Activated CD4-positive, alpha-beta T cell treated with anti-CD3 and anti-CD28 coated beads for 36 hours (primary cell): ENCODE measurements at regions of chr11 and their contacts with region 1.

Region 1: GRCh38 chr11:48047616-48048015 is 67.3 kb downstream of the PTPRJ start:
- DNase-seq: no peak
- ATAC-seq: no peak
- H3K4me3 Mint-ChIP-seq: no peak overlapping the region
- H3K27ac Mint-ChIP-seq: no peak overlapping the region
- H3K4me1 Mint-ChIP-seq: peaks cover 68% of the 10 kb centered on the region
- H3K27me3 Mint-ChIP-seq: no peaks in the 10 kb centered on the region

Region 2: GRCh38 chr11:47800759-47801158 is 246.9 kb before region 1 on chr11:
- CTCF ChIA-PET with region 1: no interaction called
- POLR2A ChIA-PET with region 1: no interaction called
- intact Hi-C with region 1: no loop called
- DNase-seq: no peak
- ATAC-seq: no peak
- H3K4me3 Mint-ChIP-seq: no peak overlapping the region
- H3K27ac Mint-ChIP-seq: no peak overlapping the region
- H3K4me1 Mint-ChIP-seq: peaks cover 13% of the 10 kb centered on the region
- H3K27me3 Mint-ChIP-seq: no peaks in the 10 kb centered on the region

Region 3: GRCh38 chr11:47863189-47863892 is 184.3 kb before region 1 on chr11:
- CTCF ChIA-PET with region 1: no interaction called
- POLR2A ChIA-PET with region 1: no interaction called
- intact Hi-C with region 1: loop called in 1 of 2 experiments (anchors 10 kb)
- DNase-seq: no peak
- ATAC-seq: peak; percentile 56
- H3K4me3 Mint-ChIP-seq: no peak overlapping the region
- H3K27ac Mint-ChIP-seq: no peak overlapping the region
- H3K4me1 Mint-ChIP-seq: peaks cover 39% of the 10 kb centered on the region
- H3K27me3 Mint-ChIP-seq: no peaks in the 10 kb centered on the region

Region 4: GRCh38 chr11:48034926-48035871 is 12.4 kb before region 1 on chr11:
- CTCF ChIA-PET with region 1: interaction called, 4 read pairs
- POLR2A ChIA-PET with region 1: interaction called, 5 read pairs
- intact Hi-C with region 1: loop called in 1 of 2 experiments (anchors 2 kb)
- DNase-seq: no peak
- ATAC-seq: peak; percentile 40
- H3K4me3 Mint-ChIP-seq: no peak overlapping the region
- H3K27ac Mint-ChIP-seq: peak overlapping the region; percentile 6
- H3K4me1 Mint-ChIP-seq: peaks cover 65% of the 10 kb centered on the region
- H3K27me3 Mint-ChIP-seq: no peaks in the 10 kb centered on the region

Region 5: GRCh38 chr11:48063424-48063978 is 15.9 kb after region 1 on chr11:
- CTCF ChIA-PET with region 1: no interaction called
- POLR2A ChIA-PET with region 1: no interaction called
- intact Hi-C with region 1: loop called in 1 of 2 experiments (anchors 2 kb)
- DNase-seq: no peak
- ATAC-seq: no peak
- H3K4me3 Mint-ChIP-seq: no peak overlapping the region
- H3K27ac Mint-ChIP-seq: no peak overlapping the region
- H3K4me1 Mint-ChIP-seq: peaks cover 49% of the 10 kb centered on the region
- H3K27me3 Mint-ChIP-seq: no peaks in the 10 kb centered on the region

Region 6: DNA sequence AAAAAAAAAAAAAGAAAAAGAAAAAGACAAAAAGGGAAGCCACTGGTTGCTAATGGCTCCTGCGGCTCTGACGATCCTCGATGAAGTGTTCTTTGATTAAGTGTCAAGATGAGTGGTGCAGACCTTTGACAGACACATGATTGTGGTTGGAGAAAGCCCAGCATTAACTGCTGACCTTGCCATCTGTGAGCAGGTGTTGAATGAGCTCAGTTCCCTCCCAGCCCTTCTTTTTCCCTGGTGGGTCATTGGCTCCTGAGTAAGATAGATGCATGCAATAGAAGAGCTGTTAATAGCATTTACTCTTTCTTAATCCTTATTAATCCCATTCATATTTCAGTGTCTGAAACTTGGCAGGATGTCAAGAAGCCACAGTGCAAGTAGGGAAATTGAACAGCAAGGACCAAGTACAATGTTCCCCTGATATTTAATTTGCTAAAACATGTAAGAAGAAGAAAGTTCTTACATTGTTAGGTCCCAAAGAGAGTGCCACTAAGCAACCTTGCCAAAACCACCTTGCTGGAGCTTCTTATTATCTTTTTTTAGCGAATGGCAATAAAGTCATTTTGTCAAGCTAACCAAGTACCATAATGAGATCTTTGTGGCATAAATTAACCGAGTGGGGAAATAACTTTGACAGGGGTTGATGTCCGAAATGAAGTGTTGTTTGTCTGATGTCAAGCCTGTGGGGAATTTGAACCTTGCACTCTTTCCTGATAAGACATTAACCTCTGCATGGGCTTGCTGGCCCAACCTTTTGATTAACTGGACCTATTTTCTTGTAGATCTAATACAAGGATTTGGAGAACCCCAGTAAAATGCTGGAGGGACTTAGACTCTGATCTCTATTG is 46.4 kb after region 1 on chr11:
- CTCF ChIA-PET with region 1: no interaction called
- POLR2A ChIA-PET with region 1: no interaction called
- intact Hi-C with region 1: no loop called
- DNase-seq: no peak
- ATAC-seq: no peak
- H3K4me3 Mint-ChIP-seq: no peak overlapping the region
- H3K27ac Mint-ChIP-seq: no peak overlapping the region
- H3K4me1 Mint-ChIP-seq: peaks cover 63% of the 10 kb centered on the region
- H3K27me3 Mint-ChIP-seq: no peaks in the 10 kb centered on the region